MCF 10A (cell line): ENCODE measurements at regions of chr9 and their contacts with region 1.

Region 1: GRCh38 chr9:35790385-35791296 is 750 bp upstream of the NPR2 start:
- DNase-seq: peak; percentile 78
- H3K4me3 Mint-ChIP-seq: no peak overlapping the region
- H3K27ac Mint-ChIP-seq: no peak overlapping the region
- H3K4me1 Mint-ChIP-seq: peaks cover 6% of the 10 kb centered on the region
- H3K27me3 Mint-ChIP-seq: no peaks in the 10 kb centered on the region
- CTCF ChIP-seq: peak; percentile 69

Region 2: DNA sequence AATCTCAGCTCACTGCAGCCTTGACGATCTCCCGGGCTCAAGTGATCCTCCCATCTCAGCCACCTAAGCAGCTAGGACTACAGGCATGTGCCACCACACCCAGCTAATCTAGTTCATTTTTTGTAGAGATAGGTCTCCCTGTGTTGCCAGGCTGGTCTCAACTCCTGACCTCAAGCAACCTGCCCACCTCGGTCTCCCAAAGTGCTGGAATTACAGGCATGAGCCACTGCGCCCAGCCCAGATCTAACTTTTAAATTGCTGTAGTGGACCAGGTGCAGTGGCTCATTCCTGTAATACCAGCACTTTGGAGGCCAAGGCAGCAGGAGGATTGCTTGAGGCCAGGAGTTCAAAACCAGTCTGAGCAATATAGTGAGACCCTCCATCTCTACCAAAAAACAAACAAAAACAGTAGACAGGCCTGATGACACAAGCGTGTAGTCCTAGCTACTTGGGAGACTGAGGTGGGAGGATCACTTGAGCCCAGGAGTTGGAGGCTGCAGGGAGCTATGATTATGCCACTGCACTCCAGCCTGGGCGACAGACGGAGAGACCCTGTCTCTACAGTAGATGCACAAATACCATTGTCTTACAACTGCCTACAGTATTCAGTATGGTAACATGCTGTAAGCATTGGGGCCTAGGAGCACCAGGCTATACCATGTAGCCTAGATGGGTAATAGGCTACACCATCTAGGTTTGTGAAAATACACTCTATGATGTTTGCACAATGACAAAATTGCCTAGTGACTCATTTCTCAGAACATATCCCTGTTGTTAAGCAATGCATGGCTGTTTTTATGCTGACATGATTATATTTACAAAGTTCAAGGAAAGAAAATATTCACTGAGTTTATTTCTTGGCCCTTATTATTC is 138.4 kb before region 1 on chr9:
- CTCF ChIA-PET with region 1: no interaction called
- POLR2A ChIA-PET with region 1: no interaction called
- intact Hi-C with region 1: no loop called
- DNase-seq: peak; percentile 82
- H3K4me3 Mint-ChIP-seq: no peak overlapping the region
- H3K27ac Mint-ChIP-seq: no peak overlapping the region
- H3K4me1 Mint-ChIP-seq: peaks cover 5% of the 10 kb centered on the region
- H3K27me3 Mint-ChIP-seq: no peaks in the 10 kb centered on the region
- CTCF ChIP-seq: no peak

Region 3: GRCh38 chr9:35774907-35775635 is 15.6 kb before region 1 on chr9:
- CTCF ChIA-PET with region 1: interaction called, 20 read pairs
- POLR2A ChIA-PET with region 1: interaction called, 3 read pairs
- intact Hi-C with region 1: no loop called
- DNase-seq: no peak
- H3K4me3 Mint-ChIP-seq: no peak overlapping the region
- H3K27ac Mint-ChIP-seq: no peak overlapping the region
- H3K4me1 Mint-ChIP-seq: no peaks in the 10 kb centered on the region
- H3K27me3 Mint-ChIP-seq: no peaks in the 10 kb centered on the region
- CTCF ChIP-seq: no peak

Region 4: DNA sequence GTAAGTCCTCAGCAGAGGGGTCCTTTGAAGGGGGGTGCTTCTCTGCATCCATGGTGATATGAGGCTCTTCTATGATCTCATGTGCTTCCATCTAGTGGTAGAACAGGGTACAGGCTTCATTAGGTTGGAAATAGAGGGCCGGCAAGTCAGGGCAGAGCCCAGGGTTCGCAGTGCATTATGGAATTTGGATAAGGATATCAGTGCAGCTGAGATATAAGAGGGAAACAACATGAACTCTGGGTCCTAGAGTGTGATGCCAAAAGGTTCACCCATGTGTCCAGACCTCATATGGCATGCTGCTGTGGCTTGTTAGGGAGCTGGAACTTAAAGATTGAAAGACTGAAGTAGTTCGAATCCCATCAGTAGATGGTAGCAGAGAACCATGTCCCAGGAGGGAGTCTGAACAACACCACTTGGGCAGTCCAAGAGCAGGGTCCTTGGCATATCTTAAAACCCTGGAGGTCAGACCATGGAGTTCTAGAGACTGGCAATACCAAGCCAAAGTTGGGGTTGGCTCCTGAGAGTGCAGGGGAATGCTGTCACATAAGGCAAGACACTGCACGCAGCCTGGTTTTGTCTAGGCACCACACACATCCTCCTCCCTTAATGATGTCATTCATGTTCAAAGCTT is 35.5 kb after region 1 on chr9:
- CTCF ChIA-PET with region 1: interaction called, 9 read pairs
- POLR2A ChIA-PET with region 1: no interaction called
- intact Hi-C with region 1: loop called (anchors 1 kb)
- DNase-seq: peak; percentile 73
- H3K4me3 Mint-ChIP-seq: no peak overlapping the region
- H3K27ac Mint-ChIP-seq: peak overlapping the region; percentile 46
- H3K4me1 Mint-ChIP-seq: peaks cover 40% of the 10 kb centered on the region
- H3K27me3 Mint-ChIP-seq: no peaks in the 10 kb centered on the region
- CTCF ChIP-seq: peak; percentile 60

Region 5: DNA sequence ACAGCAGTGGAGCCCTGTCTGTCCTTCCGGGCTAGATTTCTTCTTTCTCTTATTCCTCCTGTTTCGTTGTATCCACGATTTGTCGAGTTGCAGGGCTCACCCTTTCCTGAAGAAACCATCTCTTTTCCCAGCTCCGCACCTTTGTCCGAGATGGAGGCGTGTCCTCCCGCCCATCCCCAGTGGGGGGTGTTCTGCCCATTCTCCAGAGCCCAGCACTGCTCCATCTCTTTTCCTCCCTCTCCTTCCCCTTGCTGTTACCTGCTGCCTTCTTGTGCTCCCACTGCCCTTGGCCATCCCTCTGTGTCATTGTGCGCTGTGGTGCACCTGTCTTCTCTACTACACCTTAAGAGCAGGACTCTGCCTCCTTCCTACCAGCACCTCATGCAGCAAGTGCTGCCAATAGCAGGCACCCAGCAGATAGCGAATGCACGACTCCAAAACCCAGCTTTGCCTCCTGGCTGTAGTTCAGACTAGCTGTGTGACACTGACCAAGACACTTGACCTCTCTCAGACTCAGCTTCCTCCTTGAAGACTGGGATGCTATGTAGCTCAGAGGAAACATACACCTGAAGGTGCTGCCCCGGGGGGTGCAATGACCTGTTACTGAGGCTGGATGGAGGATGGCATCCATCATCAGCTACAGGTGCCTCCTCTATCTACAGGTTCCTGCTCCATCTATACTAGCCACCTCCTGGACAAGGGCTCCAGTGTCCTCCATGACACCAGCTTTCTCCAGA is 70.7 kb after region 1 on chr9:
- CTCF ChIA-PET with region 1: no interaction called
- POLR2A ChIA-PET with region 1: no interaction called
- intact Hi-C with region 1: no loop called
- DNase-seq: no peak
- H3K4me3 Mint-ChIP-seq: no peak overlapping the region
- H3K27ac Mint-ChIP-seq: no peak overlapping the region
- H3K4me1 Mint-ChIP-seq: no peaks in the 10 kb centered on the region
- H3K27me3 Mint-ChIP-seq: peaks cover 34% of the 10 kb centered on the region
- CTCF ChIP-seq: no peak

Region 6: DNA sequence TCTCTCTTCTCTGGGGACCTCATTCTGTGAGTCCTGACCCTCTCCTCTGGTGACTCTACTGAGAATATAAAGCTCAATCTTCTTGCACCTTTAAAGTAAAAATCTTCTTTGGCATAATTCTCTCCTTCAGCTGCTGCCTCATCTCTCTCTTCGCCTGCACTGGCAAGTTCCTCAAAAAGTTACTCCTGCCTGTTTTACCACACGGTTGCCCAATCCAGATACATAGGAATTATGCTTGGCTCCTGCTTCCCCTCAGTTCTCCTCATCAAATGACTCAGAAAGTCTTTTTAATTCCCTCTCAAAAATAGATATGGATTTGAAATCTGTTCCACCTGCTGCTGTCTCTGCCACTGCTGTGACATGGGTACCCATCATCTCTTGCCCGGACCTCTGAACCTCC is 101.0 kb after region 1 on chr9:
- CTCF ChIA-PET with region 1: interaction called, 12 read pairs
- POLR2A ChIA-PET with region 1: interaction called, 3 read pairs
- intact Hi-C with region 1: no loop called
- DNase-seq: no peak
- H3K4me3 Mint-ChIP-seq: no peak overlapping the region
- H3K27ac Mint-ChIP-seq: no peak overlapping the region
- H3K4me1 Mint-ChIP-seq: no peaks in the 10 kb centered on the region
- H3K27me3 Mint-ChIP-seq: peaks cover 14% of the 10 kb centered on the region
- CTCF ChIP-seq: no peak

Region 7: GRCh38 chr9:35945341-35946018 is 154.8 kb after region 1 on chr9:
- CTCF ChIA-PET with region 1: interaction called, 10 read pairs
- POLR2A ChIA-PET with region 1: no interaction called
- intact Hi-C with region 1: no loop called
- DNase-seq: peak; percentile 89
- H3K4me3 Mint-ChIP-seq: peak overlapping the region; percentile 72
- H3K27ac Mint-ChIP-seq: peak overlapping the region; percentile 79
- H3K4me1 Mint-ChIP-seq: peaks cover 7% of the 10 kb centered on the region
- H3K27me3 Mint-ChIP-seq: no peaks in the 10 kb centered on the region
- CTCF ChIP-seq: peak; percentile 73

Region 8: DNA sequence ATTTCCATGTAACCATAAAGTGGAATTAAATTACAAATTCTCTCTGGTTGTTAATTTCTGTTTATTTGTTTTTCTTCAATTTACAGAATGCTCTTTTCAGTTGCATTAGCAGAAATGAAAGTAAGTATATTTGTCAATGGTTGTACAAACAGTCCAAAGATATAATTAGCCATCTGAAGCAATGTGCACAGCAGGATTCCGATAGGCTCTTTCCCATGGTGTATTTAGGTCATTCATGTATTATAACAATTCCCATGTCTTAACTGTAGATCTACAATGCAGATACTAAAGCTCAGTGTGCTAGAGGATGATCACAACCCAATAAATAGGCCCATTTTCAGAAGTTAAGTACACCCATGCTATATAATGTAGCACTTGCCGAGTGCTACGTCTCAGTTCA is 289.9 kb after region 1 on chr9:
- CTCF ChIA-PET with region 1: no interaction called
- POLR2A ChIA-PET with region 1: no interaction called
- intact Hi-C with region 1: no loop called
- DNase-seq: no peak
- H3K4me3 Mint-ChIP-seq: no peak overlapping the region
- H3K27ac Mint-ChIP-seq: no peak overlapping the region
- H3K4me1 Mint-ChIP-seq: no peaks in the 10 kb centered on the region
- H3K27me3 Mint-ChIP-seq: no peaks in the 10 kb centered on the region
- CTCF ChIP-seq: no peak